ENCODE measurements at regions of chr5 and their contacts with region 1.

Region 1: GRCh38 chr5:141402553-141403260 is at the start of gene PCDHGA9:
- DNase-seq: no peak
- ATAC-seq: no peak
- H3K4me3 Mint-ChIP-seq: no peak within 1 kb of the TSS
- H3K27ac Mint-ChIP-seq: no peak within 1 kb of the TSS
- H3K4me1 Mint-ChIP-seq: no peaks in the 10 kb centered on the region
- H3K27me3 Mint-ChIP-seq: peaks cover 14% of the 10 kb centered on the region
- CTCF ChIP-seq: no peak
- total RNA-seq, gene PCDHGA9: 1.9 to 2.9 TPM (median 2.3 TPM) in 3 replicates

Region 2: GRCh38 chr5:141349917-141350619 is 52.6 kb before region 1 on chr5 and contains the start of gene PCDHGB1:
- CTCF ChIA-PET with region 1: interaction called, 11 read pairs
- POLR2A ChIA-PET with region 1: no interaction called
- DNase-seq: peak; percentile 86
- ATAC-seq: peak; percentile 96
- H3K4me3 Mint-ChIP-seq: peak within 1 kb of the TSS; percentile 72
- H3K27ac Mint-ChIP-seq: peak within 1 kb of the TSS; percentile 47; the same call in 1 of the 2 replicates
- H3K4me1 Mint-ChIP-seq: peaks cover 2% of the 10 kb centered on the region
- H3K27me3 Mint-ChIP-seq: peaks cover 3% of the 10 kb centered on the region
- CTCF ChIP-seq: peak; percentile 50
- total RNA-seq, gene PCDHGB1: 4.9 to 5.6 TPM (median 5.5 TPM) in 3 replicates

Region 3: GRCh38 chr5:141387233-141387949 is 15.3 kb before region 1 on chr5 and contains the start of gene PCDHGB4:
- CTCF ChIA-PET with region 1: interaction called, 17 read pairs
- POLR2A ChIA-PET with region 1: no interaction called
- DNase-seq: peak; percentile 80
- ATAC-seq: peak; percentile 96
- H3K4me3 Mint-ChIP-seq: peak within 1 kb of the TSS; percentile 81
- H3K27ac Mint-ChIP-seq: no peak within 1 kb of the TSS
- H3K4me1 Mint-ChIP-seq: 0 out of 2 replicates have a peak, but pooled peaks cover 3% of the 10 kb centered on the region
- H3K27me3 Mint-ChIP-seq: peaks cover 37% of the 10 kb centered on the region
- CTCF ChIP-seq: peak; percentile 48; the same call in 1 of the 2 replicates
- total RNA-seq, gene PCDHGB4: 7.8 to 9.1 TPM (median 8.8 TPM) in 3 replicates

Measured in WTC11 (cell line).